Natural killer cell (primary cell): ENCODE measurements at regions of chr1 and their contacts with region 1.

Region 1: DNA sequence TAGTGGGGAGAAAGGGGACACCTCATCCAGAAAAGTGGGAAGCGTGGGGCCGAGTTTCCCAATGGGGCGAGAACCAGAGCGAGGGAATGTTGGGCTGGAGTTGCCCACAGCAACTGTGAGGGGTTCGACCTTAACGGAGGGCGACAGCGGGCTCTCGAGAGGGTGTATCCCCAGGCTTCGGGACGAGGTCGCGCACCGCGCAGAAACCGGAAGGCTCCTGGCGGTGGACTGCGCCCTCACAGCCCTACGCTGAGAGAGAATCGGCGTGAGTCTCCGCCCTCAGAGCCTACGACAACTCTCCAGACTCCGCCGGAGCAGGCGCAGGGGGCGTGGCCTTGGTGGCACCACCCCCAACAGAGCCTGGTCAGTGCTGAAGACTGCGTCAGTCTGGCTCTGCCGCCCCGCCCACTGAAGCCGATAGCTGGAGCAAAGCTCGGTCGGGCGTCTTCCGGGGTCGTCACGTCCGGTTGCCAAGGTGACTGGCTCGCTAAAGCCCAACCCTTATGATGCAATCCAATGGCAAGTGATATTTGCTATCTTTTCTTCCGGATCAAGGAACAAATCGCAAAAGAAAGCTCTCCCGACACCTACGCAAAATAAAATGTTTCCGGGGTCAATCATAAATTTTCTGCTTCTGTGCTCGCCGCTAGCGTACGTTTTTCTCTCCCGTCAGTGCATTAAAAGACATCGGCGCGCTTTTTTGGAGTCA is at the start of gene LRIF1:
- DNase-seq: peak; percentile 100
- ATAC-seq: peak; percentile 91 to 99 (median 92)
- H3K4me3 ChIP-seq: peak within 1 kb of the TSS; percentile 93
- H3K4me3 Mint-ChIP-seq: peak within 1 kb of the TSS; percentile 90
- H3K27ac ChIP-seq: peak within 1 kb of the TSS; percentile 95
- H3K27ac Mint-ChIP-seq: peak within 1 kb of the TSS; percentile 91 to 99
- H3K4me1 ChIP-seq: peaks cover 11% of the 10 kb centered on the region
- H3K4me1 Mint-ChIP-seq: peaks cover 41 to 43% of the 10 kb centered on the region in 2 donors
- H3K27me3 ChIP-seq: peaks cover 10% of the 10 kb centered on the region
- H3K27me3 Mint-ChIP-seq: peaks cover 10 to 15% of the 10 kb centered on the region in 2 donors
- CTCF ChIP-seq: no peak
- total RNA-seq, gene LRIF1: 8.9 to 12.5 (median 10.4) TPM

Region 2: GRCh38 chr1:110872745-110873720 is 90.8 kb before region 1 on chr1 and contains the start of gene CD53:
- intact Hi-C with region 1: loop called (anchors 1 kb)
- DNase-seq: peak; percentile 46 to 88
- ATAC-seq: peak; percentile 63 to 82 (median 78)
- H3K4me3 ChIP-seq: peak within 1 kb of the TSS; percentile 71
- H3K4me3 Mint-ChIP-seq: peak within 1 kb of the TSS; percentile 99
- H3K27ac ChIP-seq: peak within 1 kb of the TSS; percentile 94
- H3K27ac Mint-ChIP-seq: peak within 1 kb of the TSS; percentile 92 to 99
- H3K4me1 ChIP-seq: peaks cover 22% of the 10 kb centered on the region
- H3K4me1 Mint-ChIP-seq: peaks cover 48 to 77% of the 10 kb centered on the region in 2 donors
- H3K27me3 ChIP-seq: no peaks in the 10 kb centered on the region
- H3K27me3 Mint-ChIP-seq: no peaks in the 10 kb centered on the region
- CTCF ChIP-seq: no peak
- total RNA-seq, gene CD53: 522 to 584 (median 541) TPM

Region 3: DNA sequence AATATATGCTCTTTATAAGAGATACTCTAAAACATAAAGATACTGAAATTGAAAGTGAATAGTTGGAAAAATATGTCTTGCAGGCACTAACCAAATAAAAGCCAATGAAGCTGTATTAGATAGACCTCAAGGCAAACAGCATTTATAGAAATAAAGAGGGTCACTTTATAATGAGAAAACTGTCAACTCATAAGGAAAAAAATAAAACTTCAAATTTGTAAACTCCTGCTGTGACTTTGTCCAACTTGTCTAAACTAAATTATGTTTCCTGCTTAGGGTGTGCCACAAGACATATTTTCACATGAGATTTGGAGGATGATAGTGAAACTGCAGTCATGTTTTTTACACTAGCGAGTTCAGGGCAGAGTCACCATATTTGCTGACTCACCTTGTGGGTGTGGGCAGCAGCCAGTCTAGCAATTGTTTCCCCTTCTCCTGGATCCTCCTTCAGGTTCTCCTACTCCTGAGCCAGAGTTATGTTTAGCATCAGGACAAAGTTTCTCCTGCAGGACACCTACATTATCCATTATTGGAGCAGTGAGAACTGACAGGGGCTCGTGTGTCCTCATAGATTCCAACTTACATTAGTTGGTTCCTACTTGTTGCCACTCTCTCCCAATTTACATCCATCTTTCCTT is 47.1 kb before region 1 on chr1:
- intact Hi-C with region 1: loop called (anchors 5 kb)
- DNase-seq: peak in 1 of 2 donors; percentile 37
- ATAC-seq: peak; percentile 78 to 85 (median 85)
- H3K4me3 ChIP-seq: no peak overlapping the region
- H3K4me3 Mint-ChIP-seq: peak overlapping the region; percentile 60
- H3K27ac ChIP-seq: no peak overlapping the region
- H3K27ac Mint-ChIP-seq: peak overlapping the region; percentile 39 to 68
- H3K4me1 ChIP-seq: peaks cover 4% of the 10 kb centered on the region
- H3K4me1 Mint-ChIP-seq: peaks cover 14% of the 10 kb centered on the region in 2 donors
- H3K27me3 ChIP-seq: no peaks in the 10 kb centered on the region
- H3K27me3 Mint-ChIP-seq: peaks cover 0 to 5% of the 10 kb centered on the region in 2 donors
- CTCF ChIP-seq: no peak

Region 4: DNA sequence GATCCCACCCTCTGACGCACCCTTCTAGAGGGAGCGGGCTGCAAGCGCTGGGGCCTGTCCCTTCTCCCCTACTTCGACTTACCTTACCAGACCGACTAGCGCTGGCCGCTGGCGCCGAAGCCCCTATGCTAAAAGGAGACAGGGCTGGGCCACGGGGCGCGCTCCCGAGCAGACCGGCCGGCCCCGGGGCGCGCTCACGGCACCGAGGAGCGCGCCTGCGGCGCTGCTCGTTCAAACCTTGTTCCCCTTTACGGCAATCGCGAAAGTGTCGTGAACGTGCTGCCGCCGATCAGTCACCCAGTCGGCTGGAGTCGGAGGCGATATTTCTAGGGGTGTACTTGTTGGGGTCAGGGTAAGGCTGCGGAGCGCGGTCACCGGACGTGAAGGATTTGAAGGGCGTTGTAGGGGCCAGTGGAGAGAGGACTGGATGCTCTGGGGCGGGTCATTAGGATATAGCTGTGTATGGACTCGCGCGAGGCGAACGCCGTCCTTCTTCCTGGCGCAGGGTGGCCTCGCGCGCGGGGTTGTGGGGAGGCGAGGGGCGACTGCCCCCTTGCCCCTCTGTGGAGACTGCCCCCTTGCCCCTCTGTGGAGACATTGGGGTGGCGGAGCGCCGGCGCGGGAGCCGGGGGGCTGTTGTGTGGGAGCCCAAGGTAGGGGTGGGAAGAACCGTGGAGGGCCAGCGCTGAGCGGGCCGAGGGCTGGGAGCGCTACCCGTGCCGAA is 176.3 kb after region 1 on chr1 and contains the starts of genes CEPT1 and DRAM2:
- intact Hi-C with region 1: loop called (anchors 5 kb)
- DNase-seq: peak; percentile 91 to 95
- ATAC-seq: peak; percentile 79 to 96 (median 82)
- H3K4me3 ChIP-seq: peak within 1 kb of the TSS; percentile 88
- H3K4me3 Mint-ChIP-seq: peak within 1 kb of the TSS; percentile 99
- H3K27ac ChIP-seq: peak within 1 kb of the TSS; percentile 96
- H3K27ac Mint-ChIP-seq: peak within 1 kb of the TSS; percentile 91 to 98
- H3K4me1 ChIP-seq: no peaks in the 10 kb centered on the region
- H3K4me1 Mint-ChIP-seq: peaks cover 40 to 48% of the 10 kb centered on the region in 2 donors
- H3K27me3 ChIP-seq: no peaks in the 10 kb centered on the region
- H3K27me3 Mint-ChIP-seq: no peaks in the 10 kb centered on the region
- CTCF ChIP-seq: no peak
- total RNA-seq, gene CEPT1: 35.4 to 49.5 (median 40.9) TPM
- total RNA-seq, gene DRAM2: 35.8 to 40.8 (median 36.4) TPM

Region 5: DNA sequence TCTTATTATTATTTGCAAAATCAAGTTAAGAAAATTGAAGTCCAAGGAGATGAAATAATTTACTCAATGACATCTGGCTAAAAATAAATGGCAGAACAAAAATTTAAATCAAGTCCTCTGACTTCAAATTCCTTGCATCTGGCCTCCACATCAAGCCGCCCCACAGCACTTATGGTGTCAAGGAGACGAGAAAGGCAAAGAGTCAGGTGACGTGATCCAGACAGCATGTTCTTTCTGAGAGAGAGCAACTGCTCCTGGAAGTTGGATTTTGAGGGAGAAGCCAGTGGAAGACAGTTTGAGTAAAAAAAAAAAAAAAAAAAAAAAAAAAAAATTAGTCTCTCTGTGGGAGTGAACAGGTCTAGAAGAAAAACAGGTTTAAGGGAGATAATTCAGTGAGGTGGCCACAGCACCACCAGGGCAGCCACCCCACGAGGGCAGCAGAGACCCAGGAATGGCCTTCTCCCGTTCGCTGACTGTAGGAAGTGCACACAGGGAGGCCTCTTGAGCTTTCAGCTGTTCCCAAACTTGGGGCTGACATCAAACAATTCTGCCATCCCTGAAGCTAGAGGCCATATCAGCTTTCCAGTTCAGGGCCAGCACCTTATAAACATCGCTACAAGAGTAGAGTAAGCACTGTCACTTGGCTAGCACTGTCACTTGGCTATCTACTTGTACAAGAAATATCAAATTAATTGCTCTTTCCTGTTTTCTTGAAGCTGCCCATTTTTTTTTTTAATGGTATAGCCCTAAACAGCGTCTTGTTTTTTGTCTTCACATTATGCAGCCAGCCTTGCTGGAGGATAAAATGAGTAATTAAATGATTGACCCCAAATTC is 517.8 kb after region 1 on chr1:
- intact Hi-C with region 1: no loop called
- DNase-seq: peak; percentile 36 to 73
- ATAC-seq: peak; percentile 68 to 77 (median 72)
- H3K4me3 ChIP-seq: no peak overlapping the region
- H3K4me3 Mint-ChIP-seq: no peak overlapping the region
- H3K27ac ChIP-seq: no peak overlapping the region
- H3K27ac Mint-ChIP-seq: no peak overlapping the region
- H3K4me1 ChIP-seq: peaks cover 19% of the 10 kb centered on the region
- H3K4me1 Mint-ChIP-seq: peaks cover 28 to 40% of the 10 kb centered on the region in 2 donors
- H3K27me3 ChIP-seq: no peaks in the 10 kb centered on the region
- H3K27me3 Mint-ChIP-seq: no peaks in the 10 kb centered on the region
- CTCF ChIP-seq: peak; percentile 34